B cell (primary cell): ENCODE measurements at regions of chr2 and their contacts with region 1.

Region 1: GRCh38 chr2:37083873-37084794 is at the starts of genes GPATCH11 and HEATR5B:
- DNase-seq: peak; percentile 94
- ATAC-seq: peak; percentile 81
- H3K4me3 ChIP-seq: peak within 1 kb of the TSS; percentile 75 to 93 (median 89)
- H3K4me3 Mint-ChIP-seq: peak within 1 kb of the TSS; percentile 76
- H3K27ac ChIP-seq: peak within 1 kb of the TSS; percentile 69 to 91
- H3K27ac Mint-ChIP-seq: peak within 1 kb of the TSS; percentile 84
- H3K4me1 ChIP-seq: peaks cover 67 to 73% of the 10 kb centered on the region in 2 donors
- H3K4me1 Mint-ChIP-seq: peaks cover 61% of the 10 kb centered on the region
- H3K27me3 ChIP-seq: no peaks in the 10 kb centered on the region
- H3K27me3 Mint-ChIP-seq: no peaks in the 10 kb centered on the region
- CTCF ChIP-seq: no peak
- total RNA-seq, gene GPATCH11: 18.2 and 20.2 TPM in 2 replicates
- total RNA-seq, gene HEATR5B: 44.3 and 50.0 TPM in 2 replicates

Region 2: DNA sequence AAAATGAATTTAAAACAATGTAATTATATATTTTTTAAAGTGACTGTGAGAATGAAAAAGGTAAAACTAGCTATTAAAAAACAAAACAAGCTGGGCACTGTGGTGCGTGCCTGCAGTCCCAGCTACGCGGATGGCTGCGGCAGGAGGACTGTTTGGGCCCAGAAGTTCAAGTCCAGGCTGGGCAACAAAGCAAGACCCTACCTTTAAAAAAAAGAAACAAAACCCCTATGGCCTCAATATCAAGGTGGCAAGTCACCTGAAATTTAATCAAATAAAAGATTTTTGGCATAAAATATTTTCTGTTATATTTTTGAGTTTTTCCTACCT is 70.9 kb before region 1 on chr2:
- CTCF ChIA-PET with region 1: no interaction called
- POLR2A ChIA-PET with region 1: no interaction called
- intact Hi-C with region 1: loop called (anchors 5 kb)
- DNase-seq: no peak
- ATAC-seq: peak; percentile 9
- H3K4me3 ChIP-seq: no peak overlapping the region
- H3K4me3 Mint-ChIP-seq: no peak overlapping the region
- H3K27ac ChIP-seq: peak overlapping the region; percentile 43 to 86
- H3K27ac Mint-ChIP-seq: peak overlapping the region; percentile 78
- H3K4me1 ChIP-seq: peaks cover 36 to 41% of the 10 kb centered on the region in 2 donors
- H3K4me1 Mint-ChIP-seq: peaks cover 30% of the 10 kb centered on the region
- H3K27me3 ChIP-seq: no peaks in the 10 kb centered on the region
- H3K27me3 Mint-ChIP-seq: no peaks in the 10 kb centered on the region
- CTCF ChIP-seq: no peak

Region 3: GRCh38 chr2:37196320-37197195 is 112.4 kb after region 1 on chr2 and contains the start of gene CEBPZOS:
- CTCF ChIA-PET with region 1: no interaction called
- POLR2A ChIA-PET with region 1: no interaction called
- intact Hi-C with region 1: loop called (anchors 1 kb)
- DNase-seq: peak; percentile 94
- ATAC-seq: peak; percentile 89
- H3K4me3 ChIP-seq: peak within 1 kb of the TSS; percentile 70 to 87 (median 80)
- H3K4me3 Mint-ChIP-seq: peak within 1 kb of the TSS; percentile 98
- H3K27ac ChIP-seq: peak within 1 kb of the TSS; percentile 78 to 81
- H3K27ac Mint-ChIP-seq: peak within 1 kb of the TSS; percentile 99
- H3K4me1 ChIP-seq: peaks cover 16 to 24% of the 10 kb centered on the region in 2 donors
- H3K4me1 Mint-ChIP-seq: peaks cover 22% of the 10 kb centered on the region
- H3K27me3 ChIP-seq: no peaks in the 10 kb centered on the region
- H3K27me3 Mint-ChIP-seq: no peaks in the 10 kb centered on the region
- CTCF ChIP-seq: no peak
- total RNA-seq, gene CEBPZOS: 36.7 and 38.0 TPM in 2 replicates

Region 4: GRCh38 chr2:37231241-37232130 is 147.4 kb after region 1 on chr2 and contains the starts of genes CEBPZ and NDUFAF7:
- CTCF ChIA-PET with region 1: no interaction called
- POLR2A ChIA-PET with region 1: no interaction called
- intact Hi-C with region 1: loop called (anchors 2 kb)
- DNase-seq: peak; percentile 90
- ATAC-seq: peak; percentile 92
- H3K4me3 ChIP-seq: peak within 1 kb of the TSS; percentile 76 to 95 (median 91)
- H3K4me3 Mint-ChIP-seq: no peak within 1 kb of the TSS
- H3K27ac ChIP-seq: peak within 1 kb of the TSS; percentile 85 to 90
- H3K27ac Mint-ChIP-seq: no peak within 1 kb of the TSS
- H3K4me1 ChIP-seq: peaks cover 26 to 28% of the 10 kb centered on the region in 2 donors
- H3K4me1 Mint-ChIP-seq: peaks cover 18% of the 10 kb centered on the region
- H3K27me3 ChIP-seq: no peaks in the 10 kb centered on the region
- H3K27me3 Mint-ChIP-seq: no peaks in the 10 kb centered on the region
- CTCF ChIP-seq: no peak
- total RNA-seq, gene CEBPZ: 43.9 and 56.5 TPM in 2 replicates
- total RNA-seq, gene NDUFAF7: 35.4 and 42.0 TPM in 2 replicates

Region 5: GRCh38 chr2:37376421-37377186 is 292.5 kb after region 1 on chr2:
- CTCF ChIA-PET with region 1: no interaction called
- POLR2A ChIA-PET with region 1: no interaction called
- intact Hi-C with region 1: loop called (anchors 5 kb)
- DNase-seq: peak; percentile 81
- ATAC-seq: peak; percentile 74
- H3K4me3 ChIP-seq: peak overlapping the region in 4 of 5 experiments; percentile 5 to 36 (median 30)
- H3K4me3 Mint-ChIP-seq: peak overlapping the region; percentile 83
- H3K27ac ChIP-seq: peak overlapping the region; percentile 72 to 74
- H3K27ac Mint-ChIP-seq: peak overlapping the region; percentile 90
- H3K4me1 ChIP-seq: peaks cover 42 to 45% of the 10 kb centered on the region in 2 donors
- H3K4me1 Mint-ChIP-seq: peaks cover 43% of the 10 kb centered on the region
- H3K27me3 ChIP-seq: no peaks in the 10 kb centered on the region
- H3K27me3 Mint-ChIP-seq: no peaks in the 10 kb centered on the region
- CTCF ChIP-seq: no peak